ENCODE measurements at regions of chr11 and their contacts with region 1.

Region 1: GRCh38 chr11:126282736-126283591 is at the start of gene TIRAP:
- DNase-seq: peak; percentile 51 to 82 (median 66)
- ATAC-seq: peak; percentile 71 to 80
- H3K4me3 Mint-ChIP-seq: peak within 1 kb of the TSS; percentile 90 to 100 (median 95)
- H3K27ac Mint-ChIP-seq: peak within 1 kb of the TSS; percentile 95 to 99 (median 98)
- H3K4me1 Mint-ChIP-seq: peaks cover 29 to 57% (median 51%) of the 10 kb centered on the region in 4 donors
- H3K27me3 Mint-ChIP-seq: no peaks in the 10 kb centered on the region
- polyA plus RNA-seq, gene TIRAP: 7.4 to 11.6 (median 8.3) TPM

Region 2: DNA sequence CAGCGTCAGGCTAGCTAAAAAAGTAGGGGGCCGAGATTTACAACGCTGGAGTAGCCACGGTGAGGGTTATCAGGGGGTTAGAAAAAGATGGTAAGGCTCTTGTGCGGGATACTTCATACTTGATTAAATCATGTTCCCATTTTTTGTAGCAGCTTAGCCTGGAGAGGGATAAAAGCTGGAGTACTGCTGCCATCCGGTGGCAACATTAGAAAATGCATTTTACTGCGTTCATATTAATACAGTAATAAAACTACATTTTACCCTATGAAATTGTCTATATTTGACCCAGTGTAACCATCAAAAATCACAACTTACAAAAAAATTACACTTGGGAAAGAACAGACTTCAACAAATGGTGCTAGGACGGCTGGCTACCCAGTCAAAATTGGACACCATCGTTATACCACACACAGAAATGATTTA is 88.8 kb before region 1 on chr11:
- POLR2A ChIA-PET with region 1: no interaction called
- DNase-seq: peak in 5 of 10 donors; percentile 11 to 38 (median 30)
- ATAC-seq: peak in 1 of 2 donors; percentile 49
- H3K4me3 Mint-ChIP-seq: no peak overlapping the region
- H3K27ac Mint-ChIP-seq: no peak overlapping the region
- H3K4me1 Mint-ChIP-seq: peaks cover 0 to 5% (median 0%) of the 10 kb centered on the region in 4 donors
- H3K27me3 Mint-ChIP-seq: no peaks in the 10 kb centered on the region

Region 3: GRCh38 chr11:126211235-126212088 is 71.5 kb before region 1 on chr11 and contains the starts of genes FAM118B and RPUSD4:
- POLR2A ChIA-PET with region 1: interaction called, 12 read pairs
- DNase-seq: peak; percentile 97 to 99 (median 98)
- ATAC-seq: peak; percentile 95 to 97
- H3K4me3 Mint-ChIP-seq: peak within 1 kb of the TSS; percentile 94 to 100 (median 99)
- H3K27ac Mint-ChIP-seq: peak within 1 kb of the TSS; percentile 93 to 99 (median 98)
- H3K4me1 Mint-ChIP-seq: peaks cover 19 to 48% (median 38%) of the 10 kb centered on the region in 4 donors
- H3K27me3 Mint-ChIP-seq: no peaks in the 10 kb centered on the region
- polyA plus RNA-seq, gene FAM118B: 8.9 to 16.3 (median 13.7) TPM
- polyA plus RNA-seq, gene RPUSD4: 18.1 to 21.7 (median 18.8) TPM

Region 4: DNA sequence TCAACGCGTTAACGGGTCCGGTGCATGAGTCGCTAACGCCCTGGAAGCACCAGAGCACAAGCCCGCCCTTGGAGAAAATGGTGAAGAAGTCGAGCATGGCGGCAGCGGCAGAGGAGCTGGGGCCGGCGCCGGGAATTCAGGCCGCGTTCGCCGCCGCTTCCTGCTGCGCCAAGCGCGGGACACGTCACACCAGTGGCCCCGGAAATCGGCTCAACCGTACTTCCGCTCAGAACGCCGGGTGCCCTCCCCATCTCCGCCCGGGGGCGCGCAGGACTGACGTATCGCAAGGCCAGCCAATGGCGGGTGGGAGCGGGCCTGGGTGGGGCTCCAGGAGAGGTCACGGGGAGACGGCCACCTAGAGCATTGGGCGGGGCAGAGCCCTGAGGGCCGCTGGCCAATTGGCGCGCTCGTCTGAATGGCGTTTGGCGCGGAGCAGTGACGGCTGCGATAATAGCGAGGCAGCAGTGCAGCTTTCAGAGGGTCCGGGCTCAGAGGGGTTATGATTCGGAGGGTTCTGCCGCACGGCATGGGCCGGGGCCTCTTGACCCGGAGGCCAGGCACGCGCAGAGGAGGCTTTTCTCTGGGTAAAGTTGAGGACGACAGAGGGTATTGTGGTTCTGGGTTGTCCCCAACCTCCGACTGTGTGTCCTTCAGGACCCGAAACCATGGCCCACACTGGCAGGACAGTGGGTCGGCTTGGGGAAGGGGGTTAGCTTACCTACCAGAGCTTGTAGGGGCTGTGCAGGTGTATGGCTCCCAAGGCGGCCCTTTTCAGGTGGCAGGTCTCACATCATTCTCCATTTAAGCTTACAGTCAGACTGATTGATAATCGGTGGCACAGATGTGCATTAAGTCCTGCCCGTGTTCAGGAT is 14.0 kb before region 1 on chr11 and contains the starts of genes FOXRED1 and SRPRA:
- POLR2A ChIA-PET with region 1: interaction called, 91 read pairs
- DNase-seq: peak; percentile 97 to 100 (median 100)
- ATAC-seq: peak; percentile 96 to 97
- H3K4me3 Mint-ChIP-seq: peak within 1 kb of the TSS; percentile 95 to 98 (median 97)
- H3K27ac Mint-ChIP-seq: peak within 1 kb of the TSS; percentile 95 to 99 (median 98)
- H3K4me1 Mint-ChIP-seq: peaks cover 24 to 49% (median 43%) of the 10 kb centered on the region in 4 donors
- H3K27me3 Mint-ChIP-seq: peaks cover 0 to 1% (median 0%) of the 10 kb centered on the region in 5 donors
- polyA plus RNA-seq, gene FOXRED1: 23.5 to 28.7 (median 28.3) TPM
- polyA plus RNA-seq, gene SRPRA: 92.3 to 134 (median 95.7) TPM

Region 5: DNA sequence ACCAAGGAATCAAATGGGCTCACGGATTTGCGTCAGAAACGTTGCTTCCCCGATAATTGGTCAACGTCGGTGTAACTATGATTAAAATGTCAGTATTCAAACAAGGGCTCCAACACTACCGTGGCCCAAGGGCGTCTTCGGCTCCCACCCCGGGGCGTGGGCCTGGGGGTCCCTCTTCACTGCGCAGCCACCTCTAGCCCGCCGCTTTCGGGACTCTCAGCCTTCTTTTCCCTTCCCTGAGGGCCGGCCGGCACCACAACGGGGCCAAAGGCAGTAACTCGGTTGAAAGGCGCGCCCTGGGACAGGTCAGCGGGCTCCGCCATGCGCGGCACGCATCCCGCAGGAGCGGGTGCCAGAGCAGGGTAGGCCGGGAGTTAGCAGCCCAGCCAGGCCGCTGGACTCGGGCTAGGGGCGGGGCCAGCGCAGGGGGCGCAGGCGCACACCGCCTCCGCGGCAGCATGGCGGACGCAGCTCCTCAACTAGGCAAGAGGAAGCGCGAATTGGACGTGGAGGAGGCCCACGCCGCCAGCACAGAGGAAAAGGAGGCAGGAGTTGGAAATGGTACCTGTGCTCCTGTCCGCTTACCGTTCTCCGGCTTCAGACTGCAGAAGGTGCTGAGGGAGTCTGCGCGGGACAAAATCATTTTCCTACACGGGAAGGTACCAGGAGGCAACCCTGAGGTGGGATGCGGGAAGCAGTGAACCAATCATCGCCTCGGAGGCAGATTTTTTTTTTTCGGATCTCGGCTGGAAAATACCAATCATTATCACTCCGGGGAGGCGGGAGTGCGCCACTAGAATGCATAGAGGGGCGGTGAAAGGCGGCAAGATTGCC is 20.9 kb after region 1 on chr11 and contains the start of gene DCPS:
- POLR2A ChIA-PET with region 1: interaction called, 28 read pairs
- DNase-seq: peak; percentile 78 to 88 (median 86)
- ATAC-seq: peak; percentile 98
- H3K4me3 Mint-ChIP-seq: peak within 1 kb of the TSS; percentile 88 to 99 (median 96)
- H3K27ac Mint-ChIP-seq: peak within 1 kb of the TSS; percentile 89 to 99 (median 98)
- H3K4me1 Mint-ChIP-seq: peaks cover 16 to 45% (median 38%) of the 10 kb centered on the region in 4 donors
- H3K27me3 Mint-ChIP-seq: no peaks in the 10 kb centered on the region
- polyA plus RNA-seq, gene DCPS: 36.7 to 47.2 (median 37.3) TPM

Region 6: GRCh38 chr11:126318574-126319373 is 35.8 kb after region 1 on chr11:
- POLR2A ChIA-PET with region 1: interaction called, 11 read pairs
- DNase-seq: peak in 3 of 10 donors; percentile 24 to 37 (median 30)
- ATAC-seq: peak; percentile 76 to 77
- H3K4me3 Mint-ChIP-seq: peak overlapping the region; percentile 48 to 84 (median 70)
- H3K27ac Mint-ChIP-seq: peak overlapping the region; percentile 62 to 94 (median 89)
- H3K4me1 Mint-ChIP-seq: peaks cover 33 to 54% (median 38%) of the 10 kb centered on the region in 4 donors
- H3K27me3 Mint-ChIP-seq: no peaks in the 10 kb centered on the region

Region 7: GRCh38 chr11:126366065-126366785 is 83.3 kb after region 1 on chr11:
- POLR2A ChIA-PET with region 1: interaction called, 11 read pairs
- DNase-seq: no peak
- ATAC-seq: no peak
- H3K4me3 Mint-ChIP-seq: peak overlapping the region in 7 of 10 donors; percentile 11 to 48 (median 36)
- H3K27ac Mint-ChIP-seq: peak overlapping the region in 2 of 10 donors; percentile 43 to 64
- H3K4me1 Mint-ChIP-seq: peaks cover 0 to 17% (median 8%) of the 10 kb centered on the region in 4 donors
- H3K27me3 Mint-ChIP-seq: no peaks in the 10 kb centered on the region

Measured in naive thymus-derived CD8-positive, alpha-beta T cell (primary cell).